Esophagus muscularis mucosa (tissue), 4 donors: ENCODE measurements at regions of chr4 and their contacts with region 1.

Region 1: DNA sequence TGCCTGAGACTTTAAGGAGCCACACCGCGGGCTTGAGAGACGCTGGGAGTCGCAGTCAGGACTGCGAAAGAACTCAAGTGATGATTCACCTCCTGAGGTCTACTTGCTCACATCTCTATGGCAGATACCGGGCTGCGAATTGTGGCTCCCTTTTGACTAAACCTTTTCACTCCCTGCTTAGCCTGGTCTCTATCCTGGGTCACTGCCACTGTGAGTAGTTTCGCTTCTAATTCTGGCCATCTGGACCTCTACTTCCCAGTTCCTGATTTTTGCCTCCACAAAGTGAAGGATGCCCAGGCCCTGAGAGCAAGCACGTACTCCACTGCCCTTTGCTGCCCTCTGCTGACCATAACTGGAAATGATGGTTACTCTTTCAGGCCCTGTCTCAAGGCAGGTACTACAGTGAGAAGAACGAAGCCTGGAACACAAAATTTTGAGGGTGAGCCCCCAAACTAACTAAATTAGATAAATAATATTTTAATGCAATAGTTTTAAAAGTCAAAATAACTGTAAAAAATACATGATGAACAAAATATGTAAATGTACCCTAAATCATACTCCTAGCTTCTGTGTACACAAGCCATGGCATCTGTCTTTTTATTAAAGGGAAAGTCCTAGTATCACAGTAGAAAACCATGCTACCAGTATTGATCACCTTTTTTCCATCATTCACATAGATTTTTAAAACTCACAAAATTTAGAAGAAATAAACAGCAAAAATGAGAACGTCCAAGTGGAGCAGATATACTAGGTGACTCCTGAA is 16.7 kb downstream of the MAD2L1 start:
- DNase-seq: peak; percentile 97
- H3K4me3 ChIP-seq: peak overlapping the region; percentile 27 to 43 (median 34)
- H3K27ac ChIP-seq: peak overlapping the region; percentile 66 to 83 (median 74)
- H3K4me1 ChIP-seq: peaks cover 0 to 49% (median 35%) of the 10 kb centered on the region in 4 donors
- H3K27me3 ChIP-seq: no peaks in the 10 kb centered on the region
- CTCF ChIP-seq: peak; percentile 86 to 89 (median 88)
- EP300 ChIP-seq: no peak
- POLR2A ChIP-seq: no peak

Region 2: DNA sequence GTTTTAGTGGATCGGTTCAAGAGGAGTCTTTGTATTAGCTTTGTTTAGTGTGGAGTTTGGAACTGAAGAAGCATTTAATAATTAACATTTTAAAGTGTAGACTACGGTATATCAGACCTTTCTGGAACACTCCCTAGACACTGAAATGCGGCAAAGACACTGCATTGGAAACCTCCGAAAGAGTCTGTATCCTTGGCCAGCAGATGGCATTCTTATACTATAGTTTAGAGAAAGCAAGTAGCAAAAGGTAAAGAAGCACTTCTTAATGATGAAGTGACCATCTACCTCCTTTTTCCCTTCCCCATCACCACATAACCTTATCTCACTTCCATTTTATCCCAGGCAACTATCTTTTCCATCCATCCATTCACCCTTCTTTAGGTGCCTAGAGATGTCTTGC is 735.6 kb before region 1 on chr4:
- intact Hi-C with region 1: loop called (anchors 5 kb)
- DNase-seq: no peak
- H3K4me3 ChIP-seq: no peak overlapping the region
- H3K27ac ChIP-seq: no peak overlapping the region
- H3K4me1 ChIP-seq: peaks cover 0 to 6% (median 0%) of the 10 kb centered on the region in 4 donors
- H3K27me3 ChIP-seq: no peaks in the 10 kb centered on the region
- CTCF ChIP-seq: peak; percentile 40 to 58 (median 55)
- EP300 ChIP-seq: no peak
- POLR2A ChIP-seq: no peak

Region 3: GRCh38 chr4:119490335-119490734 is 559.6 kb before region 1 on chr4:
- intact Hi-C with region 1: loop called (anchors 10 kb)
- DNase-seq: no peak
- H3K4me3 ChIP-seq: no peak overlapping the region
- H3K27ac ChIP-seq: no peak overlapping the region
- H3K4me1 ChIP-seq: no peaks in the 10 kb centered on the region
- H3K27me3 ChIP-seq: no peaks in the 10 kb centered on the region
- CTCF ChIP-seq: peak in 1 of 3 experiments; percentile 33
- EP300 ChIP-seq: no peak
- POLR2A ChIP-seq: no peak

Region 4: GRCh38 chr4:119559044-119559647 is 490.8 kb before region 1 on chr4:
- intact Hi-C with region 1: loop called (anchors 2 kb)
- DNase-seq: no peak
- H3K4me3 ChIP-seq: no peak overlapping the region
- H3K27ac ChIP-seq: peak overlapping the region in 3 of 4 donors; percentile 11 to 43 (median 38)
- H3K4me1 ChIP-seq: peaks cover 0 to 41% (median 29%) of the 10 kb centered on the region in 4 donors
- H3K27me3 ChIP-seq: no peaks in the 10 kb centered on the region
- CTCF ChIP-seq: peak; percentile 55 to 57 (median 56)
- EP300 ChIP-seq: no peak
- POLR2A ChIP-seq: no peak

Region 5: DNA sequence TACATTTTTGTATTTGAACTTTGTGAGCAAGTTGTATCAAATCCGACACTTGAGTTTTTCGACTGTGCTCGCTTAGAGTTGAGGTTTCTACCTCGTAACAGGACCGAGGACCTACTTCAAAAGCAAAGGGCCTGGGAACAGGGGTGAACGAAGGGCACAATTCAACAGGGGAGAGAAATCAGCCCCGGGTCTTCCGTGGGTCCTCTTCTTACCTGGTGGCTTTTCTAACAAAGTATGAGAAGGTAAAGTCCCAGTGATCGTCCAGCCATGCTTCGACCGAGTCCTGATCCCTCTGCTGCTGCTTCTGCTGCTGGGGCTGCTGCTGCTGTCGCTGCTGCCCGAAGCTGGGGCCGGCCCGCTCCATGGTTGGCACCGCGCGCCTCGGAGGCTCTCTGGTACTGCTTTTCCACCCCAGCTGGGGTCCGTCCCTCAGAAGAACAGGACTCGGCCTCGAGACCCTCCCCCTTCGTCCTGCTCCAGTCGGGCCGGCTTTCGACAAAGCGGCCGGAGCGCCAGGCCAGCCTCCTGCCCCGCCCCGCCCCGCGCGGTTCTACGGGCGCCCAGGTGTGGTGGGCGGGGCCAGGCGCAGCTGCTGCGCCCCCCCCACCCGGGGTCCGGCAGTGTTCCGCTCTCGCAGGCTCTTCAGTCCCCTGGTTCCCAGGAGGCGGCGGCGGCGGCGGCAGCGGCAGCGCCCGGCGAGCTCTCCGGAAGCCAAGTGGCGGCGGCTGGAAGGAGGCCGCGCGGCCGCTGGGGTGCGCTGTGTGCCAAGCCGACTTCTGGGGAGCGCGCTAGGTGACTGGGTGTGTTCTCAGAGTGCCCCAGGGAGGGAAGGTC is 421.4 kb before region 1 on chr4 and contains the start of gene PDE5A:
- intact Hi-C with region 1: loop called (anchors 2 kb)
- DNase-seq: peak; percentile 95
- H3K4me3 ChIP-seq: peak within 1 kb of the TSS; percentile 70 to 94 (median 92)
- H3K27ac ChIP-seq: peak within 1 kb of the TSS; percentile 90 to 97 (median 94)
- H3K4me1 ChIP-seq: peaks cover 8 to 29% (median 22%) of the 10 kb centered on the region in 4 donors
- H3K27me3 ChIP-seq: no peaks in the 10 kb centered on the region
- CTCF ChIP-seq: peak; percentile 84 to 91 (median 86)
- EP300 ChIP-seq: no peak
- POLR2A ChIP-seq: no peak
- total RNA-seq, gene PDE5A: 154 to 208 (median 199) TPM

Region 6: GRCh38 chr4:119692001-119692400 is 357.9 kb before region 1 on chr4:
- intact Hi-C with region 1: loop called (anchors 10 kb)
- DNase-seq: no peak
- H3K4me3 ChIP-seq: no peak overlapping the region
- H3K27ac ChIP-seq: no peak overlapping the region
- H3K4me1 ChIP-seq: peaks cover 0 to 25% (median 8%) of the 10 kb centered on the region in 4 donors
- H3K27me3 ChIP-seq: no peaks in the 10 kb centered on the region
- CTCF ChIP-seq: peak in 2 of 3 experiments; percentile 22 to 30
- EP300 ChIP-seq: no peak
- POLR2A ChIP-seq: no peak

Region 7: DNA sequence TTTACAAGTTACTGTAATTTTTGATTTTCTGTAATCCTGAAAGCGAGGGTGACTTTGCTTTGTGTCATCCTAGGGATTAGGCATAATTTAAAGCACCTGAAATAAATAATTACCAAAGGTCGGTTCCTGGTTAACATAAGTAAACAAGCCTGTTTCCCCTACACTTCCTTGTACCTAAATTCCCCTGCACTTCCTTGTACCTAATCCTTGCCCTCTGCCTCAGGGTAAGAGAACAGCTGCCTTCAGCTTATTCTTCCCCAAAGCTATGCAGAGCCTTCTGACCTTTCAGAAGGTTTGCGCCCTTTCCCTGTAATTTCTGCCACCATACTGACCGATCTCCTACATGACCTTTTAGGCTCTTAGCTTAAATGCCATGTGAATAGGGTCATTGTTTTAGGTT is 255.2 kb before region 1 on chr4:
- intact Hi-C with region 1: loop called (anchors 10 kb)
- DNase-seq: no peak
- H3K4me3 ChIP-seq: no peak overlapping the region
- H3K27ac ChIP-seq: no peak overlapping the region
- H3K4me1 ChIP-seq: peaks cover 0 to 11% (median 6%) of the 10 kb centered on the region in 4 donors
- H3K27me3 ChIP-seq: no peaks in the 10 kb centered on the region
- CTCF ChIP-seq: no peak
- EP300 ChIP-seq: no peak
- POLR2A ChIP-seq: no peak

Region 8: GRCh38 chr4:120509719-120510118 is 459.8 kb after region 1 on chr4:
- intact Hi-C with region 1: no loop called
- DNase-seq: no peak
- H3K4me3 ChIP-seq: no peak overlapping the region
- H3K27ac ChIP-seq: no peak overlapping the region
- H3K4me1 ChIP-seq: no peaks in the 10 kb centered on the region
- H3K27me3 ChIP-seq: no peaks in the 10 kb centered on the region
- CTCF ChIP-seq: no peak
- EP300 ChIP-seq: no peak
- POLR2A ChIP-seq: no peak